ENCODE measurements at regions of chr11 and their contacts with region 1.

Region 1: GRCh38 chr11:117239300-117239699 is 6.8 kb downstream of the RNF214 start:
- DNase-seq: peak; percentile 96
- ATAC-seq: peak; percentile 99
- H3K4me3 ChIP-seq: no peak overlapping the region
- H3K27ac ChIP-seq: peak overlapping the region; percentile 47
- H3K4me1 ChIP-seq: peaks cover 19% of the 10 kb centered on the region
- H3K27me3 ChIP-seq: no peaks in the 10 kb centered on the region
- CTCF ChIP-seq: peak; percentile 89

Region 2: GRCh38 chr11:116958246-116958645 is 281.1 kb before region 1 on chr11:
- CTCF ChIA-PET with region 1: no interaction called
- POLR2A ChIA-PET with region 1: no interaction called
- intact Hi-C with region 1: no loop called
- DNase-seq: no peak
- ATAC-seq: no peak
- H3K4me3 ChIP-seq: no peak overlapping the region
- H3K27ac ChIP-seq: no peak overlapping the region
- H3K4me1 ChIP-seq: peaks cover 12% of the 10 kb centered on the region
- H3K27me3 ChIP-seq: no peaks in the 10 kb centered on the region
- CTCF ChIP-seq: no peak

Region 3: GRCh38 chr11:117259417-117259816 is 20.1 kb after region 1 on chr11:
- CTCF ChIA-PET with region 1: interaction called, 7 read pairs
- POLR2A ChIA-PET with region 1: no interaction called
- intact Hi-C with region 1: loop called (anchors 1 kb)
- DNase-seq: peak; percentile 58
- ATAC-seq: peak; percentile 43
- H3K4me3 ChIP-seq: no peak overlapping the region
- H3K27ac ChIP-seq: peak overlapping the region; percentile 8; the same call in 1 of the 2 replicates
- H3K4me1 ChIP-seq: peaks cover 36% of the 10 kb centered on the region
- H3K27me3 ChIP-seq: no peaks in the 10 kb centered on the region
- CTCF ChIP-seq: no peak

Region 4: DNA sequence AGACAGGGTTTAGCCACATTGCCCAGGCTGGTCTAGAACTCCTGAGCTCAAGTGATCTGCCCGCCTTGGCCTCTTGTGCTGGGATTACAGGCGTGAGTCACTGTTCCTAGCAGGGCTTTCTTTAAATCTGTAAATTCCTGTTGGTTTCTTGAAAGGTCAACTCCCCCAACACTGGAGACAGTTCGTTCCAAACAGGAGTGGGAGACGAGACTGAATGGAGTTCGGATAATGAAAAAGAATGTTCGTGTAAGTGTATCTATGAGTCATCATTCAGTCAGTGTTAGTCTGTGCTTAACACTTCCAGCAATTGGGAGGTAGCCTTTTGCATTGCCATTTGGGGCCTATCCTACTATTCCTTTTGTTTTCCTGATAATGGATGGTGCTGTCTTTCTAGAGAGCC is 41.9 kb after region 1 on chr11:
- CTCF ChIA-PET with region 1: no interaction called
- POLR2A ChIA-PET with region 1: no interaction called
- intact Hi-C with region 1: loop called (anchors 1 kb)
- DNase-seq: peak; percentile 88
- ATAC-seq: peak; percentile 96
- H3K4me3 ChIP-seq: no peak overlapping the region
- H3K27ac ChIP-seq: peak overlapping the region; percentile 66
- H3K4me1 ChIP-seq: peaks cover 17% of the 10 kb centered on the region
- H3K27me3 ChIP-seq: no peaks in the 10 kb centered on the region
- CTCF ChIP-seq: no peak

Region 5: GRCh38 chr11:117316197-117316961 is 77.1 kb after region 1 on chr11 and contains the start of gene BACE1:
- CTCF ChIA-PET with region 1: no interaction called
- POLR2A ChIA-PET with region 1: no interaction called
- intact Hi-C with region 1: loop called (anchors 1 kb)
- DNase-seq: peak; percentile 91
- ATAC-seq: peak; percentile 96
- H3K4me3 ChIP-seq: peak within 1 kb of the TSS; percentile 85
- H3K27ac ChIP-seq: no peak within 1 kb of the TSS
- H3K4me1 ChIP-seq: peaks cover 20% of the 10 kb centered on the region
- H3K27me3 ChIP-seq: no peaks in the 10 kb centered on the region
- CTCF ChIP-seq: peak; percentile 61
- total RNA-seq, gene BACE1: 16.8 and 27.7 TPM in 2 replicates

Region 6: GRCh38 chr11:117327567-117328374 is 88.5 kb after region 1 on chr11 and contains the start of gene CEP164:
- CTCF ChIA-PET with region 1: no interaction called
- POLR2A ChIA-PET with region 1: interaction called, 3 read pairs
- intact Hi-C with region 1: loop called (anchors 1 kb)
- DNase-seq: peak; percentile 98
- ATAC-seq: peak; percentile 95
- H3K4me3 ChIP-seq: peak within 1 kb of the TSS; percentile 76
- H3K27ac ChIP-seq: peak within 1 kb of the TSS; percentile 57
- H3K4me1 ChIP-seq: peaks cover 10% of the 10 kb centered on the region
- H3K27me3 ChIP-seq: no peaks in the 10 kb centered on the region
- CTCF ChIP-seq: no peak
- total RNA-seq, gene CEP164: 43.7 and 51.1 TPM in 2 replicates

Region 7: GRCh38 chr11:117817368-117818040 is 578.2 kb after region 1 on chr11:
- CTCF ChIA-PET with region 1: no interaction called
- POLR2A ChIA-PET with region 1: no interaction called
- intact Hi-C with region 1: loop called (anchors 5 kb)
- DNase-seq: peak; percentile 89
- ATAC-seq: peak; percentile 68
- H3K4me3 ChIP-seq: no peak overlapping the region
- H3K27ac ChIP-seq: no peak overlapping the region
- H3K4me1 ChIP-seq: peaks cover 14% of the 10 kb centered on the region
- H3K27me3 ChIP-seq: peaks cover 12% of the 10 kb centered on the region; the same call in 1 of the 2 replicates
- CTCF ChIP-seq: peak; percentile 99

Region 8: GRCh38 chr11:118002541-118003423 is 763.5 kb after region 1 on chr11:
- CTCF ChIA-PET with region 1: no interaction called
- POLR2A ChIA-PET with region 1: no interaction called
- intact Hi-C with region 1: no loop called
- DNase-seq: no peak
- ATAC-seq: no peak
- H3K4me3 ChIP-seq: no peak overlapping the region
- H3K27ac ChIP-seq: no peak overlapping the region
- H3K4me1 ChIP-seq: no peaks in the 10 kb centered on the region
- H3K27me3 ChIP-seq: peaks cover 64% of the 10 kb centered on the region
- CTCF ChIP-seq: no peak